WTC11 (cell line): ENCODE measurements at regions of chr11 and their contacts with region 1.

Region 1: DNA sequence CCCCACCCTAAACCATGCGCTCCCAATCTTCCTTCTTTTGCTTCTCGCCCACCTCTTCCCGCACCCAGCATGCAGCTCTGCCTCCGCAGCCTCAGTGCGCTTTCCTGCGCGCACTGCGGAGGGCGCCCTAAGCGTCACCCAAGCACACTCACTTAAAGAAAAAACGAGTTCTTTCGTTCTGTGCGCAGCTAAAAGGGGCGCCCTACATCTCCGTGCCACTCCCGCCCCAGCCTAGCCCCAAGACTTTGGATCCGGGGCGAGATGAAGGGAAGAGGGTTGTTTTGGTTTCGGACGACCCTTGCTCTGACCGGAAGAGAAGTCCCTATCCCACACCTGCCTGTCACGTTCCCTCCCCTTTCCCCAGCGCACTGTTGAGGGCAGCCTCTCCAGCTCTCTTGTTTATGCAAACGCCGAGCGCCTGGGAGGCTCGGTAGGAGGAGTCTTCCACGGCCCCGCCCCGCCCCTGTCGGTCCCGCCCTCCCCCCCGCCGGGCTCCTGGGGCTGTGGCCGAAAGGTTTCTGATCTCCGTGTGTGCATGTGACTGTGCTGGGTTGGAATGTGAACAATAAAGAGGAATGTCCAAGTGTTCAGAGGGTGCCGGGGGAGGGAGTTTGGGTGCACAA is 5.3 kb downstream of the VSIG2 start:
- DNase-seq: peak; percentile 90
- ATAC-seq: peak; percentile 83
- H3K4me3 Mint-ChIP-seq: peak overlapping the region; percentile 89
- H3K27ac Mint-ChIP-seq: no peak overlapping the region
- H3K4me1 Mint-ChIP-seq: peaks cover 38% of the 10 kb centered on the region
- H3K27me3 Mint-ChIP-seq: peaks cover 100% of the 10 kb centered on the region
- CTCF ChIP-seq: peak; percentile 34; the same call in 1 of the 2 replicates

Region 2: DNA sequence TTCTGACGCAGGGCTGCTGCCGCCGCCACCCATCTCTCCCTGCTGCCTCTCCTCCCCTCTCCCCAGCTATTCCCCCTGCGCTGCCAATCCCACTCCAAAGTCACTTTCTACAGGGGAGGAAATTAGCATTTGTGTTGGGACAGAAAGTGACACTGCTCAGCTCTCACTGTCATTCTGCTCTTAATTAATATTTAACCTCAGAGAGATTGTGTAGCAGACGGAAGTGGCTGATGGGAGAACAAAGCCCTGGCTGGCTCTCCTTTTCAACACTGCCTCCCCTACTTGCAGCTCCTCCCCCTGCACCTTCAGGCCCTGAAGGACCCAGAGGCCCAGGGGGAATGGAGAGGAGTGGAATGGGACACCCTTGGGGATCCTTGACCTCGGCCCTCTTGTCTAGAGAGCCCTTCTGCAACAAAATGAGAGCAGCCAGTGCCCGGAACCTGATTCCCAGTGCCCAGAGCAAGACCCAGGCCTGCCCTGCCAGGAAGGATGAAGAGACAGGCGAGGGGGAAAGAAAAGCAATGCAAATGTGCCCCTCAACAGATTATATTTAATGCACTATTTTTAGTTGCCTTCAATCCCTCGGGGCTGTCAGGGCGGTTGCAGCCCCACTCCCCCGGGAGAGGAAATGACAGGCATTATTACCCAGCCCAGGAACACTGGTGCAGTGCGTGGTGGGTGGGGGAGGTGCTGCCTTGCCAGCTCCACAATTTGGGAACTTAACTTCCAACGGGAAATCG is 21.6 kb before region 1 on chr11:
- CTCF ChIA-PET with region 1: interaction called, 21 read pairs
- POLR2A ChIA-PET with region 1: interaction called, 3 read pairs
- DNase-seq: no peak
- ATAC-seq: peak; percentile 39
- H3K4me3 Mint-ChIP-seq: peak overlapping the region; percentile 27
- H3K27ac Mint-ChIP-seq: no peak overlapping the region
- H3K4me1 Mint-ChIP-seq: peaks cover 54% of the 10 kb centered on the region
- H3K27me3 Mint-ChIP-seq: peaks cover 61% of the 10 kb centered on the region
- CTCF ChIP-seq: no peak

Region 3: DNA sequence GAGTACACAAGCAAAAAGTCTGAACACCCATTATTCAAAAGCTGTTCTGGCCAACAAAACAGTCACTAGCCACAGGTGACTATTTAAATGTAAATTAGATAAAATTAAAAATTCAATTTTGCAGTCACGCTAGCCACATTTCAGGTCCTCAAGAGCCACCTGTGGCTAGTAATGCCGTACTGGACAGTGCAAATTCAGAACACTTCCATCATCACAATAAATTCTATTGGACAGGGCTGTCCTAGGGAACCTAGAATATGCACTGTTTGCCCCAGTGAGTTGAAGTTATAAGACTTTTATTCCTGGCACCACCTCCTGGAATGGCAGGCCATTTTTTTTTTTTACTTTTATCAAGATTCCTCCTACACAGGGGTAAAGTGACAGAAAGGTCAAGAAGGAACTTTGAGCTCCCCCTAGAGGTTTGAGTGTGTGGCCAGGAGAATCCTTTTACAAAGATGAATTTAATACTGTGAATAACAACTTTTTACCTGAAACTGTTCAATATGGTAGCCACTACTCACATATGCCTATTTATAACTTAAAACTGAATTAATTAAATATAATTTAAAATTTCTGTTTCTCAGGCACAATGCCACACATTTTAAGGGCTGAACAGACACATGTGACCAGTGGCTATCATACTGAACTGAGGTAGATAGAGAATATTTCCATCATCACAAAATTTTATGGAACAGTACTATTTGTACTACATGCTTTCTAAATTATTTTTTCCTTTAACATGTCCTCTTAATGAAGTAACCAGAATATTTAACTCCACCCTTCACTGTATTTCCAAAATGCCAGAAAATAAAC is 46.9 kb after region 1 on chr11:
- CTCF ChIA-PET with region 1: interaction called, 26 read pairs
- POLR2A ChIA-PET with region 1: no interaction called
- DNase-seq: peak; percentile 25
- ATAC-seq: peak; percentile 82
- H3K4me3 Mint-ChIP-seq: peak overlapping the region; percentile 50
- H3K27ac Mint-ChIP-seq: peak overlapping the region; percentile 22; the same call in 1 of the 2 replicates
- H3K4me1 Mint-ChIP-seq: peaks cover 76% of the 10 kb centered on the region
- H3K27me3 Mint-ChIP-seq: no peaks in the 10 kb centered on the region
- CTCF ChIP-seq: peak; percentile 51

Region 4: GRCh38 chr11:124812876-124813275 is 66.1 kb after region 1 on chr11:
- CTCF ChIA-PET with region 1: no interaction called
- POLR2A ChIA-PET with region 1: no interaction called
- DNase-seq: no peak
- ATAC-seq: no peak
- H3K4me3 Mint-ChIP-seq: no peak overlapping the region
- H3K27ac Mint-ChIP-seq: no peak overlapping the region
- H3K4me1 Mint-ChIP-seq: no peaks in the 10 kb centered on the region; the same call in 1 of the 2 replicates
- H3K27me3 Mint-ChIP-seq: peaks cover 10% of the 10 kb centered on the region
- CTCF ChIP-seq: no peak

Region 5: DNA sequence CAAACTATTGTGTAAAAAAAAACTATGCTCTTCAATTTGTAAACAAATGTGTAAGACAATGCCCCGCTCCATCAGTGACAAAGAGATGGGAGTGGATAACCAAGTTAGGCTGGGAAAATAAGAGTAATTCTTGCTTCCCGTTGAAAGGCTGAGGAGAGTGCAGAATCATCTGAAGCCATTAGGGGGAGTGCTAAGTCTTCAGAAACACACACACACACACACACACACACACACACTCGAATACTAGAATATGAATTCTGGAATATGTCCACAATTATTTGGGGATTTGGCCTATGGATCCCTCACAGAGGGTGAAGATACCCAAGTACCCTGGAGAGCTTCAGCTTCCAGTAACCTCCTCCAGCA is 90.7 kb after region 1 on chr11:
- CTCF ChIA-PET with region 1: interaction called, 15 read pairs
- POLR2A ChIA-PET with region 1: no interaction called
- DNase-seq: no peak
- ATAC-seq: peak; percentile 40
- H3K4me3 Mint-ChIP-seq: no peak overlapping the region
- H3K27ac Mint-ChIP-seq: no peak overlapping the region
- H3K4me1 Mint-ChIP-seq: peaks cover 32% of the 10 kb centered on the region
- H3K27me3 Mint-ChIP-seq: peaks cover 34% of the 10 kb centered on the region
- CTCF ChIP-seq: no peak; the same call in 1 of the 2 replicates

Region 6: GRCh38 chr11:124900464-124900863 is 153.7 kb after region 1 on chr11:
- CTCF ChIA-PET with region 1: no interaction called
- POLR2A ChIA-PET with region 1: no interaction called
- DNase-seq: no peak
- ATAC-seq: peak; percentile 18; the same call in 1 of the 2 replicates
- H3K4me3 Mint-ChIP-seq: no peak overlapping the region
- H3K27ac Mint-ChIP-seq: no peak overlapping the region
- H3K4me1 Mint-ChIP-seq: peaks cover 25% of the 10 kb centered on the region
- H3K27me3 Mint-ChIP-seq: peaks cover 24% of the 10 kb centered on the region
- CTCF ChIP-seq: no peak